Prostate gland (tissue), 2 donors: ENCODE measurements at regions of chr2 and their contacts with region 1.

Region 1: GRCh38 chr2:32168513-32168912 is 2.8 kb downstream of the SLC30A6 start:
- DNase-seq: no peak
- H3K4me3 ChIP-seq: no peak overlapping the region
- H3K27ac ChIP-seq: no peak overlapping the region
- H3K4me1 ChIP-seq: no peaks in the 10 kb centered on the region
- H3K27me3 ChIP-seq: no peaks in the 10 kb centered on the region
- CTCF ChIP-seq: no peak
- POLR2A ChIP-seq: no peak

Region 2: GRCh38 chr2:31998731-31999383 is 169.7 kb before region 1 on chr2:
- intact Hi-C with region 1: no loop called
- DNase-seq: no peak
- H3K4me3 ChIP-seq: no peak overlapping the region
- H3K27ac ChIP-seq: no peak overlapping the region
- H3K4me1 ChIP-seq: no peaks in the 10 kb centered on the region
- H3K27me3 ChIP-seq: no peaks in the 10 kb centered on the region
- CTCF ChIP-seq: no peak
- POLR2A ChIP-seq: no peak

Region 3: GRCh38 chr2:32277674-32278482 is 109.4 kb after region 1 on chr2 and contains the start of gene YIPF4:
- intact Hi-C with region 1: loop called (anchors 5 kb)
- DNase-seq: peak; percentile 88
- H3K4me3 ChIP-seq: peak within 1 kb of the TSS; percentile 77 to 96
- H3K27ac ChIP-seq: peak within 1 kb of the TSS; percentile 76 to 82
- H3K4me1 ChIP-seq: no peaks in the 10 kb centered on the region
- H3K27me3 ChIP-seq: no peaks in the 10 kb centered on the region
- CTCF ChIP-seq: no peak
- POLR2A ChIP-seq: peak; percentile 40
- total RNA-seq, gene YIPF4: 13.0 to 18.1 TPM